Activated naive CD4-positive, alpha-beta T cell treated with anti-CD3 and anti-CD28 coated beads, Interleukin-2, amount 10 ng/mL, durations not matched to agents 7 days and 5 days (primary cell): ENCODE measurements at regions of chr1 and their contacts with region 1.

Region 1: GRCh38 chr1:206846487-206846886 is 18.9 kb upstream of the IL20 start:
- DNase-seq: no peak
- H3K4me3 Mint-ChIP-seq: no peak overlapping the region
- H3K27ac Mint-ChIP-seq: no peak overlapping the region
- H3K4me1 Mint-ChIP-seq: no peaks in the 10 kb centered on the region
- H3K27me3 Mint-ChIP-seq: peaks cover 30% of the 10 kb centered on the region

Region 2: DNA sequence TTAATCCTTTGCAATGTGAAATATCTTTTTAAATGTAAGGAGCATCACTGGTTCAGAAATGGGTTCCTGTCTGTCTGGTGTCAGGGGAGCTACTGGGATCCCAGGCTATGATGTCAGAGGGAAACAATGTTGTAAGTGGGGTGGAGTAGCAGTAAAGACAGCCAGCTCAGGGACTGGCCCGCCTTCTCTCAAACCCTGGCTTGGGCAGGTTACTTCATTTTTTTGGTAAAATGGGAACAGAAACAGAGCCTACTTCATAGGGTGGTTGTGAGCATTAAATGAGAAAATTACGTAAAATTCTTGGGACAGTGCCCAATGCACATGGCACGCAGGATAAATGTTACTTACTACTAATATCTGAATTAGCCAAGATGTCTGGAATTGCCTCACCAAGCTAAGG is 11.8 kb before region 1 on chr1:
- CTCF ChIA-PET with region 1: interaction called, 10 read pairs
- DNase-seq: no peak
- H3K4me3 Mint-ChIP-seq: no peak overlapping the region
- H3K27ac Mint-ChIP-seq: no peak overlapping the region
- H3K4me1 Mint-ChIP-seq: peaks cover 39% of the 10 kb centered on the region
- H3K27me3 Mint-ChIP-seq: peaks cover 67% of the 10 kb centered on the region

Region 3: GRCh38 chr1:206856674-206857464 is 10.4 kb after region 1 on chr1:
- CTCF ChIA-PET with region 1: interaction called, 16 read pairs
- DNase-seq: peak; percentile 36
- H3K4me3 Mint-ChIP-seq: no peak overlapping the region
- H3K27ac Mint-ChIP-seq: no peak overlapping the region
- H3K4me1 Mint-ChIP-seq: peaks cover 38% of the 10 kb centered on the region
- H3K27me3 Mint-ChIP-seq: peaks cover 34% of the 10 kb centered on the region

Region 4: DNA sequence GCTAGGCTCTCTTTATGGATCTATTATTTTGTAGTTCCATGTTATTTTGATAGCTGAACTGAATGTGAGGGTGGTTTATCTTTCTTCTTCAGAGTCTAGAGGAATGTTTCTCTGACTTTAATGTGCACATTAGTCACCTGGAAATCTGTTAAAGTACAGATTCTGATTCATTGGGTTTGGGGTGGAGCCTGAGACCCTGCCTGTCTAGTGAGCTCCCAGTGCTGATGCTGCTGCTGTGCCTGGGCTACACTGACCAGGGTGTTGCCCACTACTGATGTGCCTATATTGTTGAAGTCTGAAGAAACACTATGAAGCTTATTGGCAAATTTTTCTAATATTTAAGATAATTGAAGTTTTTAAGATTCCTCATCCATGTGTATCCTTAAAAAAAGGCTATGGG is 941.3 kb after region 1 on chr1:
- CTCF ChIA-PET with region 1: no interaction called
- DNase-seq: no peak
- H3K4me3 Mint-ChIP-seq: no peak overlapping the region
- H3K27ac Mint-ChIP-seq: no peak overlapping the region
- H3K4me1 Mint-ChIP-seq: no peaks in the 10 kb centered on the region
- H3K27me3 Mint-ChIP-seq: no peaks in the 10 kb centered on the region